AG04450 (cell line): ENCODE measurements at regions of chr18 and their contacts with region 1.

Region 1: GRCh38 chr18:9913526-9914333 is at the start of gene VAPA:
- DNase-seq: peak; percentile 85
- H3K4me3 ChIP-seq: peak within 1 kb of the TSS; percentile 94
- H3K27ac ChIP-seq: peak within 1 kb of the TSS; percentile 84
- H3K27me3 ChIP-seq: peaks cover 3% of the 10 kb centered on the region
- CTCF ChIP-seq: no peak
- polyA plus RNA-seq, gene VAPA: 296 and 393 TPM in 2 replicates

Region 2: DNA sequence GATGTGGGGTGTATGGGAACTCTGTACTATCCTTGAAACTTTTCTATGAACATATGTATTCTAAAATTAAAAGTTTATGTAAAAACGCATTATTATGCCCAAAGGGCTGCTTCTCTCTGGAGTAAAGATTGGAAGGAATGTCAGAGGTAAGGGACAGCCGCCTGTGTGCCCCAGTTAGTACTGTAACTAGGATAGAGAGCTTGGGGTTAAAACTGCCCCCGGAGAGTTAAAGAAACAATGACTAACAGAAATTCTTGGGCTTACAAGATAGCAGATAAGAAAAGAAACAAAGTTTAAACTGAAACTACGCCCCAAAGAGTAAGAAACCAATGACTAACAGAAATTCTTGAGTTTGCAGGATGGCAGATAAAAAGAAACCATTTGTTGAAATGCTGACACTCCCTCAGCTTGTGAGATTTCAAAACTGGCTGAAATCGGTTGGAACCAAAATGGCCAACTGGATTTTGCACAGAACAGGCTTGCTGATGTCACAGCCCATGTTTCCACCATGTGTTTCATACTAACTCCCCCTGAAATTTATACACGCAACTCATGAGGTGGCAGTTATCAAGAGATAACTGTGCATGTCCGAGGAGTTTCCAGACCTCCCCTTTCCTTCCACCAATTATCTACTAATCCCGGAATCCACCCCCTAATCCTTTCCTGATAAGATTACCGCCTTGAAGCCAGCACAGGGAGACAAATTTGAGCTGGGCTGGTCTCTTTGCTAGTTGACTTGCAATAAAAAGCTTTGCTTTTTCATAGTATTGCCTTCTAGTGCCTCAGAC is 36.7 kb before region 1 on chr18:
- CTCF ChIA-PET with region 1: no interaction called
- POLR2A ChIA-PET with region 1: interaction called, 12 read pairs
- DNase-seq: peak; percentile 78
- H3K4me3 ChIP-seq: peak overlapping the region; percentile 44
- H3K27ac ChIP-seq: peak overlapping the region; percentile 76
- H3K27me3 ChIP-seq: no peaks in the 10 kb centered on the region
- CTCF ChIP-seq: no peak

Region 3: DNA sequence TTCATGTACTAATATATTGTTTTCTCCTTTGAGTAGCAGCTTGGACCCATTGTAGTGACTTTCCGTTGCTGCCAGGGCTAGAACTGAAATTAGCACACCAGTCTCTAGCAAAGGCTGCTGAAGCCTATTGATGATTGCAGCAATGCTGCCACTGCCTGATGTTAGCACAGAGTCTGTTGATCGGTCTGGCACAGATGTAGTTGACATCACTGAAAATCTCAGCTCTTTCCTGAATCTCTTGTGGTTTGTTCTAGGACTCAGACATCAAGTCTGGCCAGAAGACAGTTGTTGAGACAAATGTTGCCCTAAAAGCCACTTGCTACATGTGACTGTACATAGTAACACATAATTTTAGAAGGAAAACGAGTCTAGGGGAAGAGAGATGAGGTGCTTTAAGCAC is 47.3 kb after region 1 on chr18:
- CTCF ChIA-PET with region 1: no interaction called
- POLR2A ChIA-PET with region 1: interaction called, 12 read pairs
- DNase-seq: no peak
- H3K4me3 ChIP-seq: no peak overlapping the region
- H3K27ac ChIP-seq: no peak overlapping the region
- H3K27me3 ChIP-seq: no peaks in the 10 kb centered on the region
- CTCF ChIP-seq: no peak

Region 4: DNA sequence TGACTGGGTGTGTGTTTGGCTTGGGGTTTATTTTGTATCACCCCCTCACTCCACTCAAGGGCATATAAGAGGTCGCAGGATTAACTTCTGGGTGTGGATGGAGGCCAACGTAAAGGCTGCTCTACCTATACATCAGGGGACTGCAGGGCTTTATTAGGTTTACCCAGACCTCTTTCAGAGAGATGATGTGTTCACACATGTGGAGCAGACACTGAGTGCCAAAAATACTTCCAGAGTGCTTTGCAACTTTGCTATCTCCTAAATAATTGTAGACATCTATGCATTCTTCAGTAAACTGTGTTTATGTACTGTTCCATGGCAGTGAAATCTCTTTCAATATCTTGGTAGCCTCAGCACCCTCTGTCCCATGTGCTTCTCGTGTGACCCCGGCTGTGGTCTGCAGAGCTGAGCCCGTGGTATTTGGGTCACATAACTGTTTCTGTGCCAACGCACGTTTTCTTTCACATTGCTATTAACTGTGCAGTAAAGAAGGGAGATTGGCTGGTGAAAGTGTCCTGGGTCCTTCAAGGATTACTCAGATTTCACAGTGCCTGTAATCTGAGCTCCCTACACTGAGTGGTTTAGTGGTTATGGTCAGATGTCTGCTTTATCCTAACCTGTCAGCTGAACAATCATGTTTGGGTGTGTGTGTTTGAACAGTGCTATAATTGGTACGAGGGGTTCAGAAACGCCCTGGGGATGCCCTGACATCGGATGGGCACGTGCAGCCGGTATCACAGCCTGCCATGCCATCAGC is 208.2 kb after region 1 on chr18:
- CTCF ChIA-PET with region 1: no interaction called
- POLR2A ChIA-PET with region 1: no interaction called
- DNase-seq: no peak
- H3K4me3 ChIP-seq: no peak overlapping the region
- H3K27ac ChIP-seq: no peak overlapping the region
- H3K27me3 ChIP-seq: peaks cover 1% of the 10 kb centered on the region
- CTCF ChIP-seq: no peak